ENCODE measurements at regions of chr15 and their contacts with region 1.

Region 1: GRCh38 chr15:34367101-34368081 is at the start of gene LPCAT4:
- DNase-seq: peak; percentile 91 to 96 (median 95)
- ATAC-seq: peak; percentile 93 to 96
- H3K4me3 ChIP-seq: peak within 1 kb of the TSS; percentile 54
- H3K27ac ChIP-seq: peak within 1 kb of the TSS; percentile 88
- H3K4me1 ChIP-seq: peaks cover 3% of the 10 kb centered on the region
- H3K27me3 ChIP-seq: no peaks in the 10 kb centered on the region
- total RNA-seq, gene LPCAT4: 24.1 to 44.9 (median 39.7) TPM

Region 2: DNA sequence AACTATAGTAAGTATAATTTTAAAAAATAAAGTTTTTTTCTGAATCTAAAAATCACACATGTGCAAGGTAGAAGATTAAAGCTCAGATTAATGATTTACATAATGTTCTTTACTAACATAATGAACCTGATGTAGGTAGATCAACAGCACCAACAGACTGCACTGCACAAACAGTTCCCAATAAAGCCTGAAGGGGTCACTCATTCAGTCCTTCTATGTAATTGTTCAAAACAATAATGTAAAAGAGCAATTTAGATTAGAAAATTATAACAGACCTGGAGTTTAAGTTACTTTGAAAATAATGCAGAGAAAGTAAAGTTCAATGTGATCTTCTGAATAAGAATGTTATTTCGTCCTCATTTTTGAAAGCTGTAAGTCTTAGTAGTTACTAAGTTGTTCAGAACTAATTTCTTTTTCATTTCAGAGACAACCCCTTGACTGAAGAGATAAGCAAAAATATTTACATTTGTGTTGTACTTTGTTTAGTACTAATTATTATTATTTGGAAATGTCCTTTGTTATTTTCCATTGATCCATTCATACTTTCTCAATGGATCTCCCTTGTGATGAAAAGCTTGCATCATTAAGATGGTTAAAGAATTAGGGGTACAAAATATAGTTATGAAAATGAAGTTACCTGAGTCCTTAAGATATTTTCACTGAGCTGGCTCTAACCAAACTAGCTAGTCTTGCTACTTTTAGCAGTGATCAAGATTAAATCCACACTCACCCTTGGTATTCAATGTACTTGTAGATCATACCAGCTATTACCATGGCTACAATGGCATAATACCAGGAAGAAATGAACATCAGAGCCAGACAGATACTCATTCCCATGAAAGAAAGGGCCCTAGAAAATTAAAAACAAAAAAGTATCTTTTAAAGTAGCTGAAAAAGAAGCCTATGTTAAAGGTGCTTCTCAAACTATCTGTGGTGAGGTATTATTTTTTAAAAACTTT is 125.7 kb before region 1 on chr15:
- intact Hi-C with region 1: loop called in 2 of 4 experiments (anchors 5 to 10 kb)
- DNase-seq: no peak
- ATAC-seq: peak in 1 of 2 donors; percentile 40
- H3K4me3 ChIP-seq: no peak overlapping the region
- H3K27ac ChIP-seq: no peak overlapping the region
- H3K4me1 ChIP-seq: no peaks in the 10 kb centered on the region
- H3K27me3 ChIP-seq: no peaks in the 10 kb centered on the region

Region 3: DNA sequence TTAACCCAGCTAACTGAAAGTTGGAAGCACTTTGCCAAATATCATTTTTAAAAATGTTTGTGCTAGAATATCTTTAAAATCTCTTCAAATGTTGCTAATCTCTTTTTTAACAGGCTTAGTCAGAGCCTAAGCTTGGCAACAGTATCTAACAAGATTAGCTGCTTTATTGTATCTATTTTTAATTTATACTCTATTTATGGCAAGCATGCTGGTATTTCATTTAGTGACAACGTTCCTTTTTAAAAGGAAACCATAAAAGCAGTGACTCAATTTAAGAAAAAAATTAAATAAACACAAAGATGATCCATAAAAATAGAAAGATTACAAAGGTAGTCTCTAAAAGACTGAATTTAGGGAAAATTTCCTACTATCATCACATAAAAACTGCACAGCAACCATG is 70.3 kb before region 1 on chr15:
- intact Hi-C with region 1: no loop called
- DNase-seq: no peak
- ATAC-seq: no peak
- H3K4me3 ChIP-seq: no peak overlapping the region
- H3K27ac ChIP-seq: no peak overlapping the region
- H3K4me1 ChIP-seq: peaks cover 2% of the 10 kb centered on the region
- H3K27me3 ChIP-seq: no peaks in the 10 kb centered on the region

Region 4: GRCh38 chr15:34644061-34644460 is 276.7 kb after region 1 on chr15:
- intact Hi-C with region 1: no loop called
- DNase-seq: no peak
- ATAC-seq: no peak
- H3K4me3 ChIP-seq: no peak overlapping the region
- H3K27ac ChIP-seq: no peak overlapping the region
- H3K4me1 ChIP-seq: no peaks in the 10 kb centered on the region
- H3K27me3 ChIP-seq: no peaks in the 10 kb centered on the region

Measured in right cardiac atrium (tissue), 5 donors.